Dorsolateral prefrontal cortex (tissue), 120 donors: ENCODE measurements at regions of chr6 and their contacts with region 1.

Region 1: DNA sequence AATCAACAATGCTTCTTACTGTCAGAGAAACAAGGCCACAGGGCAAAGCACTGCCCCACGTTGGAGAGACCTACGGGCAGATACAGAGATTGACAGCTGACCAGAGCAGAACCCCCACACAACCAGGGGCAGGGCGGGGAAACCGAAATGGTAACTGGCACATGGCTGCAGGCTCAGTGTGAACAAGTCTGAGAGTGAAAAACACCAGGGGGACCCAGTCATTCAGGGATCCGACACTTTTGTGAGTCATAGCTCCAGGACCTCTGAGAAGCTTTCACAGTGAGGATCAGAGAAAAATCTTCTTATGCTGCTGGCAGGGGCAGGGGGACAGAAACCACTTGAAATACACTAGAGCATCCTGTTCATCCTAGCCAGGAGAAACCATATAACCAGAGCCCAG is 254.2 kb downstream of the C6orf118 start:
- DNase-seq: peak in 1 of 10 donors; percentile 32
- H3K4me3 ChIP-seq: no peak overlapping the region
- H3K27ac ChIP-seq: no peak overlapping the region
- H3K27me3 ChIP-seq: no peaks in the 10 kb centered on the region
- CTCF ChIP-seq: peak in 14 of 56 donors; percentile 8 to 42 (median 24)

Region 2: GRCh38 chr6:165231581-165232561 is 176.6 kb after region 1 on chr6:
- intact Hi-C with region 1: loop called in 1 of 2 experiments (anchors 10 kb)
- DNase-seq: peak in 4 of 10 donors; percentile 39 to 60 (median 54)
- H3K4me3 ChIP-seq: peak overlapping the region in 57 of 59 donors; percentile 1 to 67 (median 45)
- H3K27ac ChIP-seq: peak overlapping the region in 52 of 59 donors; percentile 8 to 83 (median 64)
- H3K27me3 ChIP-seq: no peaks in the 10 kb centered on the region
- CTCF ChIP-seq: peak; percentile 56 to 87 (median 76)